Activated B cell treated with CpG ODN at 0.5 μM for 24 hours (primary cell): ENCODE measurements at regions of chr10 and their contacts with region 1.

Region 1: GRCh38 chr10:22475651-22476600 is 130.6 kb downstream of the SPAG6 start:
- DNase-seq: peak; percentile 36
- ATAC-seq: peak; percentile 62
- H3K4me3 Mint-ChIP-seq: peak overlapping the region; percentile 87
- H3K27ac Mint-ChIP-seq: no peak overlapping the region
- H3K4me1 Mint-ChIP-seq: peaks cover 24% of the 10 kb centered on the region
- H3K27me3 Mint-ChIP-seq: peaks cover 47% of the 10 kb centered on the region
- CTCF ChIP-seq: no peak

Region 2: GRCh38 chr10:21525367-21526183 is 950.4 kb before region 1 on chr10 and contains the start of gene SKIDA1:
- CTCF ChIA-PET with region 1: no interaction called
- POLR2A ChIA-PET with region 1: no interaction called
- intact Hi-C with region 1: loop called (anchors 5 kb)
- DNase-seq: peak; percentile 35
- ATAC-seq: peak; percentile 65
- H3K4me3 Mint-ChIP-seq: peak within 1 kb of the TSS; percentile 89
- H3K27ac Mint-ChIP-seq: peak within 1 kb of the TSS; percentile 88
- H3K4me1 Mint-ChIP-seq: peaks cover 27% of the 10 kb centered on the region
- H3K27me3 Mint-ChIP-seq: peaks cover 37% of the 10 kb centered on the region
- CTCF ChIP-seq: no peak
- total RNA-seq, gene SKIDA1: 0.60 TPM in 1 of 2 replicates, not detected in the other

Region 3: DNA sequence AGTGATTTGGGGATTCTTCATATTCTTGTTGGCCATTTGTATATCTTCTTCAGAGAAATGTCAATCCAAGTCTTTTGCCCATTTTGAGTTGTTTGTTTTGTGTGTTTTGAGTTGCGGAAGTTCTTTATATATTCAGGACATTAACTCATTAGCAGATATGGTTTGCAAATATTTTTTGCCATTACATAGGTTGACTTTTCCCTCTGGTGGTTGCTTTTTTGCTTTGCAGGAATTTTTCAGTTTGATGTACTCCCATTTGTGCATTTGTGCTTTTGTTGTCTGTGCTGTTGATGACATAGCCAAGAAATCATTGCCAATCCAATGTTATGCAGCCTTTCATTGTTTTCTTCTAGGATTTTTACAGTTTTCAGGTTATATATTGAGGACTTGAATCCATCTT is 408.8 kb before region 1 on chr10:
- CTCF ChIA-PET with region 1: no interaction called
- POLR2A ChIA-PET with region 1: no interaction called
- intact Hi-C with region 1: no loop called
- DNase-seq: no peak
- ATAC-seq: no peak
- H3K4me3 Mint-ChIP-seq: no peak overlapping the region
- H3K27ac Mint-ChIP-seq: no peak overlapping the region
- H3K4me1 Mint-ChIP-seq: no peaks in the 10 kb centered on the region
- H3K27me3 Mint-ChIP-seq: peaks cover 2% of the 10 kb centered on the region
- CTCF ChIP-seq: no peak

Region 4: GRCh38 chr10:22655311-22655981 is 179.5 kb after region 1 on chr10:
- CTCF ChIA-PET with region 1: no interaction called
- POLR2A ChIA-PET with region 1: no interaction called
- intact Hi-C with region 1: no loop called
- DNase-seq: no peak
- ATAC-seq: peak; percentile 41
- H3K4me3 Mint-ChIP-seq: peak overlapping the region; percentile 35
- H3K27ac Mint-ChIP-seq: peak overlapping the region; percentile 72
- H3K4me1 Mint-ChIP-seq: peaks cover 98% of the 10 kb centered on the region
- H3K27me3 Mint-ChIP-seq: no peaks in the 10 kb centered on the region
- CTCF ChIP-seq: no peak